Endothelial cell of umbilical vein (primary cell): ENCODE measurements at regions of chr17 and their contacts with region 1.

Region 1: GRCh38 chr17:75749545-75750389 is 15.2 kb downstream of the GALK1 start:
- DNase-seq: peak; percentile 65
- H3K4me3 ChIP-seq: no peak overlapping the region
- H3K27ac ChIP-seq: no peak overlapping the region
- H3K4me1 ChIP-seq: no peaks in the 10 kb centered on the region
- H3K27me3 ChIP-seq: no peaks in the 10 kb centered on the region
- CTCF ChIP-seq: peak; percentile 89 to 93
- POLR2A ChIP-seq: no peak

Region 2: DNA sequence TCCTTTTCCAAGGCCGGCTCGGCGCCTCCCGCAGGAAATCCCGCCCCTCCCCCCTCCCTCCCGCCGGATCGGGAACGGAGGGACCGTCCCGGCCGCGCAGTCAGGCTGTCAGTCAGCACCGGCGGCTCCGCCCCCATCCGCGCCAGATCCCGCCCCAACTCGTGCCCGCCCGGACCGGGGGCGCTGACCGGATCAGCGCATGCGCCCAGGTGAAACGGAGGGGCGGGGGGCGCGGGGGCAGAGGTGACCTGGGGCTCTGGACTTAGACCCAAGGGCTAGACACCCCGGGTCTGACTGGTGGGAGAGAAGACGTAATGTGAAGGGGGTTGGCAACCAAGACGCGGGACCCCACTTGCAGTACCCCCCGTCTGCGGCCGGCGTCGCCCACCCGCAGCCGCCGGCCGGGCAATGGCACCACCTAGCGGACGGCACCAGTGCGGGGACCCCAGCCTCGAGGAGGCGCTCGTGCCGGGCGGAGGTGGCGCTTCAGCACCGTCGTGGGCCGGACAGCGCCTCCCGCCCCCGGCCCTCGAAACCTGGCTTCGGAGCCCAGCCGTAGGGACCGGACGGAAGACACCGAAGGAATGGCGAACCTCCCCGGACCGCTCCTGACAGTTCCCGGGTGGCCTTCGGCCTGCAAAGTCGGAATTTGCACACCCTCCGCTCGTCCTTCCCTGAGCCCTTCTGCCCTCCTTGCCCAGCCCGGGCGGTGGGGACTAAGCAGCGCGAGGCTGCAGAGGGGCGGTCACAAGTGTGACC is 234.1 kb before region 1 on chr17 and contains the start of gene CASKIN2:
- CTCF ChIA-PET with region 1: interaction called, 4 read pairs
- POLR2A ChIA-PET with region 1: no interaction called
- dilution Hi-C with region 1: no loop called
- intact Hi-C with region 1: loop called (anchors 5 kb)
- DNase-seq: peak; percentile 92
- H3K4me3 ChIP-seq: peak within 1 kb of the TSS; percentile 57 to 72 (median 70)
- H3K27ac ChIP-seq: peak within 1 kb of the TSS; percentile 59
- H3K4me1 ChIP-seq: peaks cover 46% of the 10 kb centered on the region
- H3K27me3 ChIP-seq: no peaks in the 10 kb centered on the region
- CTCF ChIP-seq: peak; percentile 100
- POLR2A ChIP-seq: no peak
- total RNA-seq, gene CASKIN2: 34.6 and 37.6 TPM in 2 replicates

Region 3: GRCh38 chr17:75625813-75626486 is 123.8 kb before region 1 on chr17:
- CTCF ChIA-PET with region 1: interaction called, 625 read pairs
- POLR2A ChIA-PET with region 1: no interaction called
- dilution Hi-C with region 1: no loop called
- intact Hi-C with region 1: no loop called
- DNase-seq: peak; percentile 15
- H3K4me3 ChIP-seq: no peak overlapping the region
- H3K27ac ChIP-seq: no peak overlapping the region
- H3K4me1 ChIP-seq: no peaks in the 10 kb centered on the region
- H3K27me3 ChIP-seq: no peaks in the 10 kb centered on the region
- CTCF ChIP-seq: peak; percentile 50 to 80
- POLR2A ChIP-seq: no peak

Region 4: GRCh38 chr17:75652915-75653549 is 96.7 kb before region 1 on chr17:
- CTCF ChIA-PET with region 1: interaction called, 68 read pairs
- POLR2A ChIA-PET with region 1: no interaction called
- dilution Hi-C with region 1: no loop called
- intact Hi-C with region 1: no loop called
- DNase-seq: peak; percentile 56
- H3K4me3 ChIP-seq: no peak overlapping the region
- H3K27ac ChIP-seq: no peak overlapping the region
- H3K4me1 ChIP-seq: peaks cover 8% of the 10 kb centered on the region
- H3K27me3 ChIP-seq: no peaks in the 10 kb centered on the region
- CTCF ChIP-seq: peak; percentile 77 to 86
- POLR2A ChIP-seq: no peak

Region 5: DNA sequence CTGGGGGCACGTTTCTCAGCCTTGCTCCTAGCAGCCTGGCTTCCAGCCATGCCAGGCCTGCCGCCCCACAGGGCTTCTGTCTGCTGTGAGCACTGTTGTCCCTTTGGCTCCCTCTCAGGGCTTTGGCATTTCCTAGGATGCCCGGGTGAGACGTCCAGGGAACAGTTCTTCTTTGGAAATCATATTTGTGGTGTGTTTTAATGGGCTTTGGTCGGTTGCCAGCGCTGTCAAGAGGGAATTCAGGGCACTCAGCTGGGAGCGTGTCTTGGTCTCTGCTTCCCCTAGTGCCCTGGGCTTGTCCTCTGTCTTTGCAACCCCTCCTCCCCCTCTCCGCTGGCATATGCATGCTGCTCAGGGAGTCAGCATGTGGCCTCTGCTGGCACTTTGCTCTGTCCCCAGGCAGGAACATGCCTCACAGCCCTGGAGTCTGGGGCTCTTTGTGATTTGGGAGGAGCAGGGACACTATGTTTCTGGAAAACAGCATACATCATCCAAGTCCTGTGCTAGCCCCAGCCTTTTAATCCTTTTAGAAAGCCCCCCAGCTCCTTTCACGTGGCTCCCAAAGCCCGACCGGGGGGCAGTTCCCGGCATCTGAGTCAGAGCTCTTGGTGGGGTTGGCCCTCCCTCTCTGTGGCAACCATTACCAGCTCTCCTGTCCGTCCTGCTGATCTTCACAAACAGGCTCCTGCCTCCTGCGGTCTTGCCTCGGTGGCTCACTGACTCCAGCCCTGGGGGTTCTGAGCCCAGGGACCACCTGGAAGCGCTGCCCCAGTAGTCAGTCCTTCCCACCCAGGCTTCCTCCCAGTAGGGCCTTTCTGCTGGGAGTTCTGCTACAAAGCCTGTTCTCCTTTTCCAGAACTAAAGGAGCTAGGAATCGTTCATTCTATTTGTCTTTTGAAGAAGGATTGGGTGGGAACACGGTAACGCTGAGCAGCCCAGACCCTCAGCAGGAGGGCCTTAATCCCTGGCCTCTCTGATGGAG is 56.0 kb before region 1 on chr17:
- CTCF ChIA-PET with region 1: interaction called, 653 read pairs
- POLR2A ChIA-PET with region 1: no interaction called
- dilution Hi-C with region 1: no loop called
- intact Hi-C with region 1: no loop called
- DNase-seq: peak; percentile 78
- H3K4me3 ChIP-seq: no peak overlapping the region
- H3K27ac ChIP-seq: peak overlapping the region; percentile 80
- H3K4me1 ChIP-seq: peaks cover 72% of the 10 kb centered on the region
- H3K27me3 ChIP-seq: no peaks in the 10 kb centered on the region
- CTCF ChIP-seq: peak; percentile 3 to 16
- POLR2A ChIP-seq: peak; percentile 63

Region 6: DNA sequence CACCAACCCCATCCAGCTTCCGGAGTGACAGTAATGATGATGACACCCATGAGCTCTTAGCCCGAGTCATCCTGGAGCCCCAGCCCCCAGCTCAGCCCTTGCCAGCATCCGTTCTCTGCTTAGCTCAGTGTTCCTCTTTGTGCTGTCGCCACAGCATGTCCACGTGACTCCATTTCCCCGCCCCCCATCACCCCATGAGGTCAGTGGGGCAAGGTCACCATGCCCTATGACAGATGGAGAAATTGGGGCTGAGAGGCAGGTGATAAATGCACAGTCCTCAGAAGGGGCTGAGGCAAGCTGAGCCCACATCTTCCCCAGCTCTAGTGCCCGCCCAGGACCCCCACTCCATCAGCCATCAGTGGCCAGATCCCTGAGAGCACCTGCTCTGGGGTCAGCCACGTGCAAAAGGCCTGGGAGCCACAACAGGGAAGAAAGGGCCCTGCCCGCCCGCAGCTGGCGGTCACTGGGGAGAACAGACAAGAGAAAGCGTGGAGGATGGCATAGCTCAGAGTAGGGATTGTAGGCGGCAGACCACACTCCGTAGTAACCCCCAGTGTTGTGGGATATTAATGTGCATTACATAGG is 11.5 kb before region 1 on chr17:
- CTCF ChIA-PET with region 1: interaction called, 35 read pairs
- POLR2A ChIA-PET with region 1: no interaction called
- dilution Hi-C with region 1: no loop called
- intact Hi-C with region 1: no loop called
- DNase-seq: no peak
- H3K4me3 ChIP-seq: no peak overlapping the region
- H3K27ac ChIP-seq: no peak overlapping the region
- H3K4me1 ChIP-seq: no peaks in the 10 kb centered on the region
- H3K27me3 ChIP-seq: no peaks in the 10 kb centered on the region
- CTCF ChIP-seq: no peak
- POLR2A ChIP-seq: no peak

Region 7: GRCh38 chr17:75795820-75796607 is 46.2 kb after region 1 on chr17:
- CTCF ChIA-PET with region 1: no interaction called
- POLR2A ChIA-PET with region 1: no interaction called
- dilution Hi-C with region 1: no loop called
- intact Hi-C with region 1: no loop called
- DNase-seq: no peak
- H3K4me3 ChIP-seq: no peak overlapping the region
- H3K27ac ChIP-seq: no peak overlapping the region
- H3K4me1 ChIP-seq: peaks cover 16% of the 10 kb centered on the region
- H3K27me3 ChIP-seq: no peaks in the 10 kb centered on the region
- CTCF ChIP-seq: no peak
- POLR2A ChIP-seq: no peak